Activated CD8-positive, alpha-beta memory T cell treated with anti-CD3 and anti-CD28 coated beads, Interleukin-2, amount 10 ng/mL, durations not matched to agents 7 days and 5 days (primary cell): ENCODE measurements at regions of chr19 and their contacts with region 1.

Region 1: DNA sequence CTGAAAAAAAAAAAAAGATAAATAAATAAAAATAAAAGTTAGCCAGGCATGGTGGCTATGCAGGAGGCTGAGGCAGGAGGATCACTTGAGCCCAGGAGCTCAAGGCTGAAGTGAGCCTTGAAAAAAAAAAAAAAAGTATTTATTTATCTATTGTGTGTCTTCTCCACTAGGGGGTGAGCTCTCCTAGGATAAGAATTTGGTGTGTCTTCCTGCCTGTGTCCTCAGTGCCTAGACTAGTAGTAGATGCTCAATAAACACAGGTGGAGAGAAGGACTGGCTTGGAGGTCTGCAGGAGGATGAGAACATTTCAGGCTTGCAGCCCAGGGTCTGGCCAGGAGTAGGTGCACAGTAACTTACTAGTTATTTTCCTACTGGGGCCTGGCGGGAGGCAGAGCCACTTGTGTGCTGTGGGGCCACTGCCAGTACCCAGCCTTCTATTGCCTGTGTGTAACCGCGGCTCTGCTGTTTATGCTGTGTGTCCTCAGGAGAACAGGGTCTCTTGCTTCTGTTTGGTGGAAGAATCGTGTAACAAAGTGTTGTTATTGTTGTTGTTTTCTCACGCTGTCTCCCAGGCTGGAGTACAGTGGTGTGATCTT is 5.4 kb downstream of the LMTK3 start:
- DNase-seq: no peak
- ATAC-seq: peak; percentile 24
- H3K4me3 Mint-ChIP-seq: no peak overlapping the region
- H3K27ac Mint-ChIP-seq: no peak overlapping the region
- H3K4me1 Mint-ChIP-seq: peaks cover 19% of the 10 kb centered on the region
- H3K27me3 Mint-ChIP-seq: peaks cover 2% of the 10 kb centered on the region

Region 2: DNA sequence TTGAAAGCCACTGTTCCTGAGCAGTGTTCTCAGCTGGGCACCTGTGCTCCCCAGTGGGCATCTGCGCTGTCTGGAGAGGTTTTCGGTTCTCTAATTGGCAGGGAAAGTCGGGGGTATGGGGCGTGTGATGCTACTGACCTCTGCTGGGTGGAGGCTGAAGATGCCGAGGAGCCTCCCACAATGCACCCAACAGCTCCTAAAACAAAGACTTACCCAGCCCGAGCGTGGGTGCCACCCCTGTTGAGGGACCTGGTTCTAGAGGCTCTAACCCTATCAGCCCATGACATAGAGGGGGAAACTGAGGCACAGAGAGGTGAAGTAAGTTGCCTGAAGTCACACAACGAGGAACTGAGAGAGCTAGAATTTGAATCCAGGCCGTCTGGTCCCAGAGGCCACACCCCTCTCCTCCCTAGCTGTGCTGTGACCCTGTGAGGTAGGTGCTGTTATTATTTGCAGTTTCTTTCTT is 102.6 kb after region 1 on chr19:
- CTCF ChIA-PET with region 1: interaction called, 31 read pairs
- DNase-seq: peak; percentile 70
- ATAC-seq: peak; percentile 83
- H3K4me3 Mint-ChIP-seq: no peak overlapping the region
- H3K27ac Mint-ChIP-seq: peak overlapping the region; percentile 66
- H3K4me1 Mint-ChIP-seq: peaks cover 2% of the 10 kb centered on the region
- H3K27me3 Mint-ChIP-seq: no peaks in the 10 kb centered on the region